Right cardiac atrium (tissue), 5 donors: ENCODE measurements at regions of chr11 and their contacts with region 1.

Region 1: GRCh38 chr11:111982019-111982464 is 43.2 kb upstream of the DLAT start:
- DNase-seq: peak; percentile 31 to 74 (median 57)
- ATAC-seq: peak in 1 of 2 donors; percentile 30
- H3K4me3 ChIP-seq: no peak overlapping the region
- H3K27ac ChIP-seq: no peak overlapping the region
- H3K4me1 ChIP-seq: peaks cover 1% of the 10 kb centered on the region
- H3K27me3 ChIP-seq: no peaks in the 10 kb centered on the region

Region 2: GRCh38 chr11:111938687-111939160 is 43.3 kb before region 1 on chr11:
- intact Hi-C with region 1: loop called (anchors 5 to 10 kb)
- DNase-seq: no peak
- ATAC-seq: peak; percentile 7 to 64
- H3K4me3 ChIP-seq: no peak overlapping the region
- H3K27ac ChIP-seq: peak overlapping the region; percentile 40
- H3K4me1 ChIP-seq: peaks cover 15% of the 10 kb centered on the region
- H3K27me3 ChIP-seq: no peaks in the 10 kb centered on the region

Region 3: DNA sequence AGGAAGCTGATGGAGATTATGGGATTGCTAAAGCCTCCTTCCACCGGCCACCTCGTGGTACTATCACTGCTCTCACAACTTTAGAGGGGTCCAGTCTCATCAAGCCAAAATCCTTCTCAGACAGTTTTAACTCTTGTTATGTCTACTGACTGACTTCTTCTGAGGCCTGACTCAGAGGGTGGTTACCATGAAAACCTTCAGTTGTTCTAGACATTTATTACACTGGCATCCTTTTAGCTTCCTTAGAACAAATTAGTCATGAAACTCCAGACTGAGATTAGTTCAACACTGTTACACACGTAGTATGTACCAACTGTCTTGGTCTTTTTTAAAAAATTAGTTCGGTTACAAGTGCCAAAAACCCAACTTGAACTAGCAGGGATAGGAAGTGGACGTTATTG is 37.4 kb before region 1 on chr11:
- intact Hi-C with region 1: loop called (anchors 5 to 10 kb)
- DNase-seq: no peak
- ATAC-seq: peak; percentile 18 to 89
- H3K4me3 ChIP-seq: no peak overlapping the region
- H3K27ac ChIP-seq: no peak overlapping the region
- H3K4me1 ChIP-seq: peaks cover 11% of the 10 kb centered on the region
- H3K27me3 ChIP-seq: no peaks in the 10 kb centered on the region